ENCODE measurements at regions of chr9 and their contacts with region 1.

Region 1: GRCh38 chr9:131781069-131781468 is 41.2 kb upstream of the RAPGEF1 start:
- DNase-seq: no peak
- ATAC-seq: no peak
- H3K4me3 ChIP-seq: no peak overlapping the region
- H3K4me3 Mint-ChIP-seq: no peak overlapping the region
- H3K27ac ChIP-seq: no peak overlapping the region
- H3K27ac Mint-ChIP-seq: no peak overlapping the region
- H3K4me1 ChIP-seq: no peaks in the 10 kb centered on the region
- H3K4me1 Mint-ChIP-seq: no peaks in the 10 kb centered on the region
- H3K27me3 ChIP-seq: peaks cover 0 to 47% of the 10 kb centered on the region in 2 experiments
- H3K27me3 Mint-ChIP-seq: peaks cover 19 to 47% of the 10 kb centered on the region in 2 donors

Region 2: DNA sequence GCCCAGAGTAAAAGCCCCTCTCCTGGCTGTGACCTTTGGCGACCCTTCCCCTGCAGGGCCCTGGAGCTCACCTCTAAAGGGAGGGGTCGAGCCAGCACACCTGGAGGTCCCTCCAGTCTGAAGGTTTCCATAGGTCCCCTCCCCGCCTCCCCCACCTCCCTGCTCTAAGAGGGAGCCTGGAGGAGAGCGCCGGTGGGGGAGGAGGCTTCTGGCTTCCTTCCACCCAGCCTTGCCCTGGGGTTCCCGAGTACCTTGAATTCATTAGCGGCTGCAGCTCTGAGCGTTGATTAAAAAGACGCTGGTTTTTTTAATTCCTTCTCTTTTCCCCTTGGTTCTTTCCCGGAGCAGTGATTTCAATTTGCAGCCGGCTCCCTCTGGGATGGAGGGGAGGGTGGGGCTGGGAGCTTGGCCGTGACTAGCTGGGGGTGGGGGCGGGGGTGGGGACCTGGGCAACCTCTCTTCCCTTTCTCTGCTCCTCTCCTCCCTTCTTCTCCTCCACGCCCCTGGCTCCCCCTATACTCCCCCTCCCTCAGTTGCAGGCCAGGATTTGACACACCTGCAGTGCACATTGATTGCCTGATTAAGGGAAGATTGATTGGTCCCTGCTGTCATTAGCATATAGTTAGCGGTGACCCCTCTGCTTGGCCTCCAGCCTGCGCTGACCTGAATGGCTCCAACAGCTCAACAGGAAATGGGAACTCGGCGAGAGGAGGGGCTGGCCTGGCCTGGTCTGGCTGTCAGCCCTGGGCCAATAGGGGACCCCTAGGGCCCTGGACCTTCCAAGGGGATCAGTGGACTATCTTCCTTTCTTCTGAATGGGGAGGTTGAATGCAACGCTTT is 26.3 kb after region 1 on chr9:
- CTCF ChIA-PET with region 1: no interaction called
- POLR2A ChIA-PET with region 1: interaction called in 1 of 2 experiments, 16 read pairs
- DNase-seq: no peak
- ATAC-seq: no peak
- H3K4me3 ChIP-seq: no peak overlapping the region
- H3K4me3 Mint-ChIP-seq: no peak overlapping the region
- H3K27ac ChIP-seq: no peak overlapping the region
- H3K27ac Mint-ChIP-seq: no peak overlapping the region
- H3K4me1 ChIP-seq: no peaks in the 10 kb centered on the region
- H3K4me1 Mint-ChIP-seq: no peaks in the 10 kb centered on the region
- H3K27me3 ChIP-seq: peaks cover 5 to 63% of the 10 kb centered on the region in 2 experiments
- H3K27me3 Mint-ChIP-seq: peaks cover 39 to 55% of the 10 kb centered on the region in 2 donors

Region 3: GRCh38 chr9:131839281-131840084 is 58.4 kb after region 1 on chr9:
- CTCF ChIA-PET with region 1: no interaction called
- POLR2A ChIA-PET with region 1: no interaction called
- DNase-seq: peak in 31 of 35 experiments; percentile 6 to 58 (median 30)
- ATAC-seq: peak; percentile 60 to 82 (median 66)
- H3K4me3 ChIP-seq: no peak overlapping the region
- H3K4me3 Mint-ChIP-seq: peak overlapping the region in 2 of 3 donors; percentile 17 to 33
- H3K27ac ChIP-seq: peak overlapping the region; percentile 82
- H3K27ac Mint-ChIP-seq: peak overlapping the region; percentile 93 to 95
- H3K4me1 ChIP-seq: peaks cover 0 to 28% of the 10 kb centered on the region in 2 experiments
- H3K4me1 Mint-ChIP-seq: peaks cover 0 to 17% (median 14%) of the 10 kb centered on the region in 3 donors
- H3K27me3 ChIP-seq: peaks cover 0 to 47% of the 10 kb centered on the region in 2 experiments
- H3K27me3 Mint-ChIP-seq: peaks cover 7 to 35% of the 10 kb centered on the region in 2 donors

Region 4: DNA sequence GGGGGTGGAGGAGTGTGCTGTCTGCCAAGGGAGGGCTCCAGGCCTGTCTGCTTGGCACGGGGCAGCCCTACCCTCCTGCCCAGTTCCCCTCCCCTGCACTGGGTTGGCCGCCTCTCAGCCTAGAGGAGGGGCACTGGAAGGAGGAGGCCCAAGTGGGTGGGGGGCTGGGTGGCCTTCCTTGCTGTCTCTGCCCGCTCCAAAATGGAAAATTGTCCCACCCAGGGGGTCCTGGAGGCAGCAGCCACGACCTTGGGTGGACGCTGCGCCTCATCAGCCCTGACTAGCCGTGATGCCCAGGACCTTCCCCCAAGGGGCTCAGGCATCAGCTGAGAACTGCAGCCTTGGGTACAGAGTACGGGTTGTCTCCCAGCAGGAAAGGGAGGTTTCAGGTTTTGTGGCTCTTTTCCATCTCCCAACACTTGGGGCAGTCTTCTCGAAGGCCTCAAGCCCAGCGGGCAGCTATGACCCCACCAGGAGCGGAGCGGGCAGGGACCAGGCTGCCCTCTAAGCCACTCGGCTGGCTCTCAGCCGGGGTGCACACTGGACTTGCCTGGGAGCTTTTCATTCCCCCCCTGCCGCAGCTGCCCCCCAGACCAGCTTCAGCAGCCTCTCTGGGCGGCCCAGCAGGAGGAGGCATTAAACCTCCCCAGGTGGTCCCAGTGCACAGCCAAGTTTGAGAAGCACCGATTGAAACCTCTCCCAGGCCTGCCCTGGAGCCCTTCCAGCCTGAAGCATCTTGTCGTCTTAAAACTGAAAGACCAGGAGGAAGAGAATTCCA is 401.4 kb after region 1 on chr9:
- CTCF ChIA-PET with region 1: no interaction called
- POLR2A ChIA-PET with region 1: no interaction called
- DNase-seq: no peak
- ATAC-seq: no peak
- H3K4me3 ChIP-seq: no peak overlapping the region
- H3K4me3 Mint-ChIP-seq: no peak overlapping the region
- H3K27ac ChIP-seq: no peak overlapping the region
- H3K27ac Mint-ChIP-seq: no peak overlapping the region
- H3K4me1 ChIP-seq: no peaks in the 10 kb centered on the region
- H3K4me1 Mint-ChIP-seq: no peaks in the 10 kb centered on the region
- H3K27me3 ChIP-seq: peaks cover 0 to 63% of the 10 kb centered on the region in 2 experiments
- H3K27me3 Mint-ChIP-seq: peaks cover 4 to 29% of the 10 kb centered on the region in 2 donors

Measured in T-cell (primary cell).